Panc1 (cell line): ENCODE measurements at regions of chr15 and their contacts with region 1.

Region 1: GRCh38 chr15:60906146-60906674 is 322.9 kb downstream of the RORA start:
- DNase-seq: no peak
- ATAC-seq: no peak
- H3K4me3 ChIP-seq: no peak overlapping the region
- H3K27ac ChIP-seq: no peak overlapping the region
- H3K4me1 ChIP-seq: no peaks in the 10 kb centered on the region
- H3K27me3 ChIP-seq: peaks cover 8% of the 10 kb centered on the region; the same call in 1 of the 2 replicates
- CTCF ChIP-seq: no peak

Region 2: DNA sequence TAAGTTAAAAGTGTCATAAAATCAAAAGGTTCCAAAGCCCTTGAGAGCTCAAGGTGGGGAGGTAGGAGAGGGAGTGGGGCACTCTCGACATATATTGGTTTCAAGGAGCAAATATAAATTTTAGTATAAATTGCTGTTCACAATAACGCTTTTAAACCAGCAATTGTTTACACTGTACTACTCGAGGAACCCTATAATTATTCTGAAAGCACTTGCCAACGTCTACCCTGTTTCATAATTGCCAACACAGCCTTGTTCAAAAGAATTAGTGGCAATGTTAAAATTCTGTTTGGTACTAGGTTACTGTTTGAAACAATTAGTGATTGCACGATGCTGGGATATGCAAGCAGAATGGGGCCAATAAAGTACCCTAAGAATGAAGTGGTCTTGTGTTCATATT is 350.9 kb before region 1 on chr15:
- CTCF ChIA-PET with region 1: interaction called, 13 read pairs
- POLR2A ChIA-PET with region 1: no interaction called
- in situ Hi-C with region 1: no loop called
- intact Hi-C with region 1: no loop called
- DNase-seq: no peak
- ATAC-seq: no peak
- H3K4me3 ChIP-seq: no peak overlapping the region
- H3K27ac ChIP-seq: no peak overlapping the region
- H3K4me1 ChIP-seq: no peaks in the 10 kb centered on the region
- H3K27me3 ChIP-seq: peaks cover 3% of the 10 kb centered on the region; the same call in 1 of the 2 replicates
- CTCF ChIP-seq: no peak